ENCODE measurements at regions of chr4 and their contacts with region 1.

Region 1: GRCh38 chr4:185395956-185396723 is 416 bp upstream of the LRP2BP start:
- DNase-seq: peak; percentile 94 to 96
- H3K4me3 ChIP-seq: peak overlapping the region; percentile 55
- H3K4me1 ChIP-seq: peaks cover 20% of the 10 kb centered on the region
- H3K27me3 ChIP-seq: no peaks in the 10 kb centered on the region

Region 2: GRCh38 chr4:185203486-185204237 is 192.5 kb before region 1 on chr4 and contains the start of gene CFAP97:
- in situ Hi-C with region 1: loop called (anchors 10 kb)
- DNase-seq: peak; percentile 40 to 80
- H3K4me3 ChIP-seq: peak within 1 kb of the TSS; percentile 43
- H3K4me1 ChIP-seq: peaks cover 16% of the 10 kb centered on the region
- H3K27me3 ChIP-seq: no peaks in the 10 kb centered on the region

Region 3: GRCh38 chr4:185587427-185588161 is 191.5 kb after region 1 on chr4:
- in situ Hi-C with region 1: no loop called
- DNase-seq: peak in 1 of 2 experiments; percentile 32
- H3K4me3 ChIP-seq: no peak overlapping the region
- H3K4me1 ChIP-seq: peaks cover 24% of the 10 kb centered on the region
- H3K27me3 ChIP-seq: no peaks in the 10 kb centered on the region

Region 4: DNA sequence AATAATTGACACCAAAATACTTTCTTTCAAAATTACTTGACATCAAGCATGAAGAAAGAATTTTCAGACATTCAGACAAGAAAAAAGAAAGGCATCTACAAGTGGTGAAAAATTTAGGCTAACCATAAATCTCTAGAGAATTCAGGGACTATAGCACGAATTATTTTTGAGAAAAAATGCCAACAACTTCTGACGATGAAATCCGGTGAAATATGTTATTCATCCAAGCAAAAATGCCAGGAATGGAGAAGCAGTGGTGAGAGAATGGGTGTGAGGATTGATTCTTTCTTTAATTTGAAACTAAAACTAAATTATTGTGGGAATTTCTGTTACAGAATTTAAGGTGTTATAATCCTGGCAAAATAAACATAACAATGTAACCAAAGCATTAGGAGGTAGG is 485.3 kb after region 1 on chr4:
- in situ Hi-C with region 1: no loop called
- DNase-seq: peak in 1 of 2 experiments; percentile 11
- H3K4me3 ChIP-seq: no peak overlapping the region
- H3K4me1 ChIP-seq: peaks cover 4% of the 10 kb centered on the region; the same call in 1 of the 2 replicates
- H3K27me3 ChIP-seq: no peaks in the 10 kb centered on the region